ENCODE measurements at regions of chr17 and their contacts with region 1.

Region 1: DNA sequence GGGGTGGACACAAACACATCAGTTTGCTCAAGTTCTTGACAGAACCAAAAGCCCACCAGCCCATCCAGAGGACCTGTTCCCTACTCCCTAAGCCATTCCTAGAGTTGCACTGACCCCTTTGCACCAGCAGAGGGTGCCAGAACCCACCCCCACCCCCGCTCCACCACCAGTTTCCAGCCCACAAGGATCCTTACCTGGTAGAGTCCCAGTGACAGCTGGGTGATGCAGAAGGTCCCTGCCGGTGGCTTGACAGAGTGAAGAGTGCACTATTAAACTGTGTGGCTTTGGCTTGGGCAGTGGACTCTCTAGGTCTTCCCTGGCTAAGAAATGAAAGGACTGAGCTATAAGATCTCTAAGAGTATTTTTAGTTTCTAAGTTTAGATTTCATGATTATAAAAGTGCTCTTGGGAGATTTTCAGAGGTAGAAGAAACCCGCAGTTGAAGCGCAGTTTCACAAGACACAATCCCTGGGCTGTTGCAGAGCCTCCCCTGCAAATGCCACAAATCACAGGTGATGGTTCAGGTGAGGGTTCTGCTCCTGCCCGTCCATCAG is 73.3 kb upstream of the MTMR4 start:
- DNase-seq: no peak
- H3K4me3 ChIP-seq: no peak overlapping the region
- H3K27ac ChIP-seq: no peak overlapping the region
- H3K4me1 ChIP-seq: no peaks in the 10 kb centered on the region
- H3K27me3 ChIP-seq: no peaks in the 10 kb centered on the region
- CTCF ChIP-seq: peak; percentile 80 to 98 (median 84)
- EP300 ChIP-seq: no peak
- POLR2A ChIP-seq: no peak

Region 2: GRCh38 chr17:58692239-58693055 is 104.7 kb after region 1 on chr17 and contains the start of gene RAD51C:
- intact Hi-C with region 1: loop called (anchors 10 kb)
- DNase-seq: peak; percentile 93
- H3K4me3 ChIP-seq: peak within 1 kb of the TSS; percentile 65 to 75 (median 72)
- H3K27ac ChIP-seq: peak within 1 kb of the TSS; percentile 82 to 86 (median 84)
- H3K4me1 ChIP-seq: peaks cover 13 to 22% (median 15%) of the 10 kb centered on the region in 4 donors
- H3K27me3 ChIP-seq: no peaks in the 10 kb centered on the region
- CTCF ChIP-seq: no peak
- EP300 ChIP-seq: peak; percentile 36
- POLR2A ChIP-seq: peak; percentile 24
- total RNA-seq, gene RAD51C: 20.1 to 27.0 (median 21.4) TPM

Region 3: GRCh38 chr17:59004338-59005111 is 416.7 kb after region 1 on chr17:
- intact Hi-C with region 1: loop called (anchors 5 kb)
- DNase-seq: no peak
- H3K4me3 ChIP-seq: no peak overlapping the region
- H3K27ac ChIP-seq: no peak overlapping the region
- H3K4me1 ChIP-seq: no peaks in the 10 kb centered on the region
- H3K27me3 ChIP-seq: no peaks in the 10 kb centered on the region
- CTCF ChIP-seq: peak; percentile 92 to 94 (median 93)
- EP300 ChIP-seq: no peak
- POLR2A ChIP-seq: no peak

Measured in esophagus muscularis mucosa (tissue), 4 donors.